Adrenal gland (tissue), 19 donors: ENCODE measurements at regions of chr10 and their contacts with region 1.

Region 1: GRCh38 chr10:28381903-28382347 is 79.1 kb upstream of the MPP7 start:
- DNase-seq: peak; percentile 66 to 96 (median 89)
- H3K4me3 ChIP-seq: no peak overlapping the region
- H3K27ac ChIP-seq: no peak overlapping the region
- H3K4me1 ChIP-seq: no peaks in the 10 kb centered on the region
- H3K27me3 ChIP-seq: peaks cover 9% of the 10 kb centered on the region
- CTCF ChIP-seq: peak; percentile 94 to 99 (median 98)
- POLR2A ChIP-seq: no peak

Region 2: DNA sequence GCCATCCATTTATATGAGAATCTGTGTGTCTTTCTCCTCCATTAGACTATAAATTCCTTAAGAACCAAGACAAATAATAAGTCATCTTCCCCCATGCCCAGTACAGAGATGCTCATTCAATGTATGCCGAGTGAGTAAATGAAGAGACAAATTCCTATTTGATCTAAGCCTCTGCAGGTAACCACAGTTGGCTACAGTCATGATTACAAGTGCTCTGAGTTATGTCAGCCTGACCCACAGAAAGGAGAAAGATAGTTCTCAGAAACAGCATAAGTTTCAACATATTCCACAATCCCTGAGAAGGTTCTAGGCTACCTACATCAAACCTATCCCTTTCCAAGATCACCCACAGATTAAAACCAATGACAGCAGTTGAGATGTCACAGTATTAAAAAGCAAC is 125.1 kb before region 1 on chr10:
- intact Hi-C with region 1: loop called (anchors 2 to 5 kb)
- DNase-seq: no peak
- H3K4me3 ChIP-seq: no peak overlapping the region
- H3K27ac ChIP-seq: no peak overlapping the region
- H3K4me1 ChIP-seq: peaks cover 0 to 10% of the 10 kb centered on the region in 2 donors
- H3K27me3 ChIP-seq: no peaks in the 10 kb centered on the region
- CTCF ChIP-seq: no peak
- POLR2A ChIP-seq: no peak

Region 3: DNA sequence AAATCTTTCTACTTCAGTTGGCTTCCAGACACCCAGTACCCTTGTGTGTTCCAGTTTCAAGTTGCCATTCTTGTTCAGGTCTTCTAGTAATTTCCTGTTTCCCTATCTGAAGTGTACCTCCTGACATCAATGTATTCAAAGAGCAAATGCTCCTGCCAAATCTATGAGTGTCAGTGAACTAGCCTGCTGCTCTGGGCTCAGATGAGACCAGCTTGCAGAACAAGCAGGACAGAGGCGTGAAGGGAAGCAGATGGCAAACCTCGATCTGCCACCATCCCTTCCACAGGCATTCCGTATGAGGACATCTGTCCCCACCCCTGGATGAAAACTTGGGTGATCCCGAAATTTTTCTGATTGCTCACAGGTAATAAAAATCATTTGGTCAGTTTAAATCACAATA is 74.7 kb before region 1 on chr10:
- intact Hi-C with region 1: loop called in 1 of 2 experiments (anchors 5 kb)
- DNase-seq: no peak
- H3K4me3 ChIP-seq: no peak overlapping the region
- H3K27ac ChIP-seq: no peak overlapping the region
- H3K4me1 ChIP-seq: no peaks in the 10 kb centered on the region
- H3K27me3 ChIP-seq: peaks cover 12% of the 10 kb centered on the region
- CTCF ChIP-seq: no peak
- POLR2A ChIP-seq: no peak